ENCODE measurements at regions of chr10 and their contacts with region 1.

Region 1: DNA sequence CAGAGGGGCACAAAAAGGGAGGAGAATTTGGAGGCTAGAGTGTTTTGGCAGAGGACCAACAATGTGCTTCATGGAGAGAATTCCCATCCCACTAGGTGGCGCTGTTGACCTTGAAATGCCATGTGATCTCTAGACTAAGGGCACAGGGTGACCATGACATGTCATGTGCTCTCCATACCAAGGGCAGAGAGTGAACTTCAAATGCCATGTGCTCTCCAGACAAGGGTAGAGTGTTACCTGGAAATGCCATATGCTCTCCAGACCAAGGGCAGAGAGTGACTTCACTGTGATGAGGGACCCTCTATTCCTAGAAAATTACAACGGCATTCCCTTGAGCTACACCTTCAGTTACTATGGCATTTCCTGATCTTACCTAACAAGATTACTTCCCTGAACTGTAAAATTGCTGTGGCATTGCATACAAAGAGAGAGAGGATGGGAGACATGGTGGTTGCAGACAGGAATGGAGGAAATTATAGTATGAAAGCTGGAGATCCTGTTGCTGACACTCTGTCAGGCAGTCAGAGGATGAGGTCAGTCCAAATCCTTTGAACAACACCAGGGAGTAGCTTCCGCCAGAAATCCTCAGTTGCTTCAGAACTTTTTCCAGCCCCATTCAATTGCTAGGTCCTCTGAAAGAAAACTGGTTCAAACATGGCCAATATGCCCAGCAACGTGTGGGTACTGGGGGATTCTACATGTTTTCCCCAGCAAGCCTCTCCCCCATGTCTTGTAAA is 60.9 kb upstream of the ACSM6 start:
- DNase-seq: peak; percentile 83
- H3K4me3 ChIP-seq: no peak overlapping the region
- H3K27ac ChIP-seq: no peak overlapping the region
- H3K4me1 ChIP-seq: no peaks in the 10 kb centered on the region
- CTCF ChIP-seq: peak; percentile 93

Region 2: GRCh38 chr10:94133239-94133638 is 999.9 kb before region 1 on chr10:
- CTCF ChIA-PET with region 1: no interaction called
- POLR2A ChIA-PET with region 1: no interaction called
- intact Hi-C with region 1: no loop called
- DNase-seq: no peak
- H3K4me3 ChIP-seq: no peak overlapping the region
- H3K27ac ChIP-seq: no peak overlapping the region
- H3K4me1 ChIP-seq: no peaks in the 10 kb centered on the region
- CTCF ChIP-seq: no peak

Region 3: GRCh38 chr10:94630017-94630688 is 503.0 kb before region 1 on chr10:
- CTCF ChIA-PET with region 1: no interaction called
- POLR2A ChIA-PET with region 1: no interaction called
- intact Hi-C with region 1: loop called (anchors 5 kb)
- DNase-seq: peak; percentile 48
- H3K4me3 ChIP-seq: no peak overlapping the region
- H3K27ac ChIP-seq: no peak overlapping the region
- H3K4me1 ChIP-seq: no peaks in the 10 kb centered on the region
- CTCF ChIP-seq: peak; percentile 87

Region 4: GRCh38 chr10:95183271-95184230 is 50.4 kb after region 1 on chr10:
- CTCF ChIA-PET with region 1: no interaction called
- POLR2A ChIA-PET with region 1: no interaction called
- intact Hi-C with region 1: loop called (anchors 5 kb)
- DNase-seq: peak; percentile 87
- H3K4me3 ChIP-seq: peak overlapping the region; percentile 70
- H3K27ac ChIP-seq: no peak overlapping the region
- H3K4me1 ChIP-seq: peaks cover 4% of the 10 kb centered on the region
- CTCF ChIP-seq: peak; percentile 90

Region 5: GRCh38 chr10:95363303-95363912 is 230.2 kb after region 1 on chr10:
- CTCF ChIA-PET with region 1: interaction called, 3 read pairs
- POLR2A ChIA-PET with region 1: interaction called, 3 read pairs
- intact Hi-C with region 1: loop called (anchors 1 kb)
- DNase-seq: peak; percentile 82
- H3K4me3 ChIP-seq: no peak overlapping the region
- H3K27ac ChIP-seq: no peak overlapping the region
- H3K4me1 ChIP-seq: peaks cover 8% of the 10 kb centered on the region
- CTCF ChIP-seq: peak; percentile 99

Region 6: GRCh38 chr10:95440756-95441546 is 307.8 kb after region 1 on chr10:
- CTCF ChIA-PET with region 1: no interaction called
- POLR2A ChIA-PET with region 1: interaction called, 3 read pairs
- intact Hi-C with region 1: loop called (anchors 5 kb)
- DNase-seq: no peak
- H3K4me3 ChIP-seq: no peak overlapping the region
- H3K27ac ChIP-seq: no peak overlapping the region
- H3K4me1 ChIP-seq: no peaks in the 10 kb centered on the region
- CTCF ChIP-seq: no peak

Region 7: GRCh38 chr10:95601116-95601719 is 468.0 kb after region 1 on chr10:
- CTCF ChIA-PET with region 1: no interaction called
- POLR2A ChIA-PET with region 1: no interaction called
- intact Hi-C with region 1: loop called (anchors 5 kb)
- DNase-seq: peak; percentile 68
- H3K4me3 ChIP-seq: no peak overlapping the region
- H3K27ac ChIP-seq: no peak overlapping the region
- H3K4me1 ChIP-seq: no peaks in the 10 kb centered on the region
- CTCF ChIP-seq: peak; percentile 95